Posterior cingulate gyrus (tissue), 11 donors: ENCODE measurements at regions of chr4 and their contacts with region 1.

Region 1: DNA sequence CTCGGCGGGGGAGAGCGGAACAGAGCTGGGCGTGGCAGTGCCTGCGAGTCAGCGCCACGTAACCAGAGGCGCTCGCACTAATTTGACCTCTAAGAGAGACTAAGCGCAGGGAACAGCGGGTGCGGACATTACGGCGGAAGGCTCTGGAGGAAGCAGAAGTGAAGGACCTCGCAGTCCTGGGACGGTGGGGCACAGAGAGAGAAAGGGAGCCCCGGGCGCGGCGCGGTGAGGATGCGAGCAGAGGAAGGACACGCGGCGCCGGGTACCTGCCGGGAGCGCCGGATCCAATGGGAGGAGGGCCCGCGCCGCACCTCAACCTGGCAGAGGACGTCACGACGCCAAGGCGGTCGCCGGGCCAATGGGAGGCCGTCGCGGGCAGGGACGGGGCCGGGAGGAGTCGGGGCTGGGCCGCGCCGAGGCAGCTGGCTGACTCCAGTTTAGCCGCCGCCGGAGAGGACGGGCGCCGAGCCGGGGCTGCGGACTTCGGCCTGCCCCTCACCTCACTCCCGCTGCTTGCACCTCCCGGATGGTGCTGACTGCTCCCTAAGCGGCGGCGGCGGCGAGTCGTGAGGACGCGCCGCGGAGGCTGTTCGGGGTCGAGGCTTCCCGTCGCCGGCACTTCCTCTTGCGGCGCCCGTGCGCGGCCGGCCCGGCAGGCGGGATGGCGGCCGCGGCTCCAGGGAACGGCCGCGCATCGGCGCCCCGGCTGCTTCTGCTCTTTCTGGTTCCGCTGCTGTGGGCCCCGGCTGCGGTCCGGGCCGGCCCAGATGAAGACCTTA is at the start of gene TMEM165:
- DNase-seq: peak; percentile 81 to 99 (median 92)

Region 2: DNA sequence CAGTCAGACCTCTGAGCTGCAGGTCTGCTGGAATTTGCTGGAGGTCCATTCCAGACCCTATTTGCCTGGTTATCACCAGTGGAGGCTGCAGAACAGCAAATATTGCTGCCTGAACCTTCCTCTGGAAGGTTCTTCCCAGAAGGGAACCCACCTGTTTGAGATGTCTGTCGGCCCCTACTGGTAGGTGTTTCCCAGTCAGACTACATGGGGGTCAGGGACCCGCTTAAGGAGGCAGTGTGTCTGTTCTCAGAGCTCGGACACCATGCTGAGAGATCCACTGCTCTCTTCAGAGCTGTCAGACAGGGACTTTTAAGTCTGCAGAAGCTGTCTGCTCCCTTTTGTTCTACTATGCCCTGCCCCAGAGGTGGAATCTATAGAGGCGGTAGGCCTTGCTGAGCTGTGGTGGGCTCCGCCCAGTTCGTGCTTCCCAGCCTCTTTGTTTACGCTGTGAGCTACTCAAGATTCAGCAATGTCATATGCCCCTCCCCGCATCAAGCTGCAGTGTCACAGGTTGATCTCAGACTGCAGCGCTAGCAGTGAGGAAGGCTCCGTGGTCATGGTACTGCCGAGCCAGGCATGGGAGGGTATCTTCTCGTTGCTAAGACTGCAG is 226.3 kb before region 1 on chr4:
- intact Hi-C with region 1: no loop called
- DNase-seq: no peak

Region 3: DNA sequence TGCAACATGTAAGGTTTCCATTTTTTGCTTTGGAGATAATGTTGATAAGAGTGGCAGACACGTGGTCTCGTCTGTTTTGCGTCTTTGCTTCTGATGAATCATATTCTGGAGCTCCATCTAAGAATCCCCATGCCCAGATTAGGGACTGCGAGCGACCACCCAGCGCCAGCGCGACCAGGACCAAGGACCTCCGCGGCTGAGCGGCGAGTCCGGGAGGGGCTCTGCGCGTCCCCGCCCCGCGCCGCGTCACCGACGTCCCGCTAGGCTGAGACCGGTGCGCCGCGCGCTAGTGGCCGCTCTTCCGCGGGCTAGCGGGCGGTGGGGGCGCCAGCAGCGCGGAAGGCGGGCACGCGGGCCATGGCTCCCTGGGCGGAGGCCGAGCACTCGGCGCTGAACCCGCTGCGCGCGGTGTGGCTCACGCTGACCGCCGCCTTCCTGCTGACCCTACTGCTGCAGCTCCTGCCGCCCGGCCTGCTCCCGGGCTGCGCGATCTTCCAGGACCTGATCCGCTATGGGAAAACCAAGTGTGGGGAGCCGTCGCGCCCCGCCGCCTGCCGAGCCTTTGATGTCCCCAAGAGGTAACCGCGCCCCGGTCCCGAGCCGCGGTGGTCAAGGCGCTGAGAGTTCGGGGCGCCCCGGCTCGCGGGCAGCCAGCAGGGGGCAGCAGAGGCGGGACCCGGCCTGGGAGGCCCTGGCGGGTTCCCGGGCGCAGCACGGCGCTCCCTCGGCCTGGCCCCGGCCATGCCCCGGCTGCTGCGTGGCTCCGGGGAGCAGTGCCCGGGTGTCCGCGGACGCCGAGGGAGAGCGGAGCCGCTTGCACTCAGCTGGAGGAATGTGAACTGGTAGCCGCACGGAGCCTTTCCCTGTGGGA is 49.5 kb before region 1 on chr4 and contains the start of gene SRD5A3:
- intact Hi-C with region 1: loop called (anchors 1 kb)
- DNase-seq: peak; percentile 67 to 97 (median 80)

Region 4: GRCh38 chr4:55363691-55364351 is 31.9 kb before region 1 on chr4:
- intact Hi-C with region 1: loop called (anchors 5 kb)
- DNase-seq: peak in 7 of 10 donors; percentile 55 to 94 (median 64)

Region 5: DNA sequence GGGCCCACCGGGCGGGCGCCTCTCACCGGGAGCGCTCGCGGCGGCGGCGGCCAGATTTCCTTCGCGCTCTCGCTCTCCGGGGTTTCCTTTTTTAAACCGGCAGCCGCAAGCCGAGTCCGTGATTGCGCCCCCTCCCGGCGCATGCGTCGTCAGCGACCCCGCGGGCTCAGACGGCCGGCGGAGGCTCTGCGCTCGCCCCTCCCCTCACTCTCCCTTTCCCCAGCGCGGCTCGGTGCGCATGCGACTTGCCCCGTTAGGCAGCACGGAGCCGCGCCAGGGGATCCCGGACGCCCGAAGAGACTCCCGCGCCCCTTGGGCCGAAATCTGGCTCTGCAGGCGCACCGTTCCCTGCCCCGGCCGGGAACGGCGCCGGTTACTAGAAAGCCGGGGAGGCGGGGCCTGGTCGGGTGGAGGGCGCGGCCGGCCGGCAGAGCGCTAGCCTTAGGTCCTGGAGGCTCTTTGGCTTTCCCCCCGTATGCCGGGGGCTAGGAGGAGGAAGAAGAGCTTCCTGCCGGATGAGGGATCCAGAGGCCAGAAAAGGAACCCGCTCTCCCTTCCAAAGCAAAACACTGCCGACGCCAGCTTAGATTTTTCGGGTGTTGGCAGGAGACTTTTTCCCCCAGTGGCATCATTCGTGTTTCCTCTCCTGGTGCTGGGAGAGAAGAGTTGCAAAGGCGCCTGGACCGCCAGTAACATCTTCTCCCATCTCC is 151.2 kb after region 1 on chr4 and contains the start of gene CLOCK:
- intact Hi-C with region 1: loop called (anchors 5 kb)
- DNase-seq: peak; percentile 76 to 97 (median 84)

Region 6: GRCh38 chr4:55853484-55854046 is 457.8 kb after region 1 on chr4 and contains the start of gene EXOC1:
- intact Hi-C with region 1: loop called (anchors 10 kb)
- DNase-seq: peak; percentile 97 to 100 (median 99)